Calu3 (cell line): ENCODE measurements at regions of chr1 and their contacts with region 1.

Region 1: DNA sequence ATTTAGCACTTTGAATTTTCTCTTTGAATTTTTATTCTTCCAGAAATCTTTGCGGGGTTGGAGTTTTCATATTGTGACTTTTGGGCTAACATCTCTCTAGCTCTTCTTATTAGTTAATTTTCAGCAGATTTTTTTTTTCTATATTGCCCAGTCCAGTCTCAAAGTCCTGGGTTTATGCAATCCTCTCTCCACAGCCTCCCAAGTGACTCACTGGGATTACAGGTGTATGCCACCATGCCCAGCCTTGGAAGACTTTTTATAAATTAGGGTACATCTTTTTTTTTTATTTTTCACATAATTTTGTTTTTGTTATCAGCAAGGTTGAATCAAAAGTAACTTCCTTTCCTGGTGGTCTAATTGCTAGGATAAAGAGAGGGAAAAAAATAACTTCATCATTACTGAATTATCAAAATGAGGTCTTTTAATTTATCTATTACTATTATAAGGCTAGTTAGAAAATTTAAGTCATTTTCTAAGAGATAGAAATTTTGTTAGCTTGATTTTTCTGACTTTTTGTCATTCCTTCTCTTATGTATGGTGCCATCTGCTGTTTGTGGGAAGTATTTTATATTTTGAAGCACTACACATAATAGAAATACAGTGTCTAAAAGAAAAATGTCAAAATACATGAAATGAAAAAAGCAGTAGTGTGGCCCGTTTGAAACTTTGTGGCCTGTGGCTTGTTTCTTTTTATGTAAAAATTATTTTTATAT is 273.4 kb upstream of the CACYBP start:
- DNase-seq: no peak
- H3K4me3 Mint-ChIP-seq: no peak overlapping the region
- H3K27ac Mint-ChIP-seq: no peak overlapping the region
- H3K4me1 Mint-ChIP-seq: no peaks in the 10 kb centered on the region
- H3K27me3 Mint-ChIP-seq: no peaks in the 10 kb centered on the region
- CTCF ChIP-seq: peak; percentile 56

Region 2: GRCh38 chr1:174097426-174097825 is 628.9 kb before region 1 on chr1:
- CTCF ChIA-PET with region 1: no interaction called
- intact Hi-C with region 1: loop called (anchors 10 kb)
- DNase-seq: no peak
- H3K4me3 Mint-ChIP-seq: no peak overlapping the region
- H3K27ac Mint-ChIP-seq: no peak overlapping the region
- H3K4me1 Mint-ChIP-seq: no peaks in the 10 kb centered on the region
- H3K27me3 Mint-ChIP-seq: peaks cover 13% of the 10 kb centered on the region
- CTCF ChIP-seq: no peak

Region 3: DNA sequence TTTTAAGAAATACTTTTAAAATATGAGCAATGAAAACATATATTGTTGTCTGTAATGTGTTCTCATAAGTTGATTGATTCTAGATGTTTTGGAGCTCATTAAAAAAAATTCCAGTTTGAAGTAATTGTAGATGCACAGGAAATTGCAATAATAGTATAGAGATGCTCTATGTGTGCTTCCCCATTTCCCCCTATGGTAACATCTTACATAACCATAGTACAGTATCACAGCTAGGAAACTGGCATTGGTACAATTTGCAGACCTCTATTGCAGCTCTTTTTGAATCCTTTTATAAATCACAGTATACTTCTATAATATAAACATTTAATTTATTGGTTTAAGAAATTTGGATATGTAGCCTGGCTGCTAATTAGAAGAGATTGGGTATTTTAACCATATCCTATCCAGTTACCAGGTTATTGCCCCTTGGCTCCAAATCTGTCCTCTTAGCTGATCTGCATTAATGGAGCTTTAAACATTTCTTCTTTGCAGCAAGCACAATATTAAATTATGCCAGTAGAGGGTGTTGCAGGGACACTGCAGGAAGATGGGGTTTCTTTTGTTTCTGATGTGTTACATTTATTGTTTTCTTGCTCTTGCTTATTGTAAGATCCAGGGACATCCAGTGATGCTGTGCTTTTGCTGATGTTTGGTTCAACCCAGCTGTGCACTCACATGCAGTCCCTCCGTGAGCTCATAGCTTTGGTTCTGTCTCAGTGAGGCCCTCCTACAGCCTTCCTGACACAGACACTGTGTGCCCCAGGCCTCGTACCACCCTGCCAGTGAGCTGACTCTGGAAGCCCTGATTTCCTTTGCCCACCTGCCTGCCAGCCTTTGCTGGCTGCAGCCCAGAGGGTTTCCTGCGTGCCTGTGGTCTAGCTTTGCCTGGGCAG is 463.7 kb before region 1 on chr1:
- CTCF ChIA-PET with region 1: interaction called, 20 read pairs
- intact Hi-C with region 1: loop called (anchors 1 kb)
- DNase-seq: peak; percentile 35
- H3K4me3 Mint-ChIP-seq: no peak overlapping the region
- H3K27ac Mint-ChIP-seq: no peak overlapping the region
- H3K4me1 Mint-ChIP-seq: no peaks in the 10 kb centered on the region
- H3K27me3 Mint-ChIP-seq: no peaks in the 10 kb centered on the region
- CTCF ChIP-seq: peak; percentile 55

Region 4: DNA sequence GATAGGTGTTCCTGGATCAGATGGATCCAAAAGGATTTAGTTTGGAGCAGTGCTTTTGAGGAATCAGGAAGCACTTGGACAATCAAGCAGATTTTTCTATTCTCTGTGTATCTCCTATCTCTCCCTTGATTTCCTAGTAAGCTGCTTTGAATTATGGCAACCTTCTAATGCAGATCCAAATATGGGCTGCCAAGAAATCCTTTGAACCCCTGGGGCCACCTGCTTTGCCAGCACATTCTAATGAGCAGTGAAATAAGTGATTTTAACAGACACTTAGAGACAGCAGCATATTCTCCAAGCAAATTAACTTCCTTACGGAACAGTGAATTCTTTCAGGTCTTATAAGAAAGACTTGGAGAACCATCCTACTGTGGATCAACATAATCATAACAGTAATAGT is 83.1 kb before region 1 on chr1:
- CTCF ChIA-PET with region 1: no interaction called
- intact Hi-C with region 1: no loop called
- DNase-seq: no peak
- H3K4me3 Mint-ChIP-seq: no peak overlapping the region
- H3K27ac Mint-ChIP-seq: no peak overlapping the region
- H3K4me1 Mint-ChIP-seq: no peaks in the 10 kb centered on the region
- H3K27me3 Mint-ChIP-seq: no peaks in the 10 kb centered on the region
- CTCF ChIP-seq: no peak